Activated CD4-positive, alpha-beta T cell treated with anti-CD3 and anti-CD28 coated beads, Interleukin-2, amount 10 ng/mL, durations not matched to agents 24 days and 14 days (primary cell): ENCODE measurements at regions of chr1 and their contacts with region 1.

Region 1: DNA sequence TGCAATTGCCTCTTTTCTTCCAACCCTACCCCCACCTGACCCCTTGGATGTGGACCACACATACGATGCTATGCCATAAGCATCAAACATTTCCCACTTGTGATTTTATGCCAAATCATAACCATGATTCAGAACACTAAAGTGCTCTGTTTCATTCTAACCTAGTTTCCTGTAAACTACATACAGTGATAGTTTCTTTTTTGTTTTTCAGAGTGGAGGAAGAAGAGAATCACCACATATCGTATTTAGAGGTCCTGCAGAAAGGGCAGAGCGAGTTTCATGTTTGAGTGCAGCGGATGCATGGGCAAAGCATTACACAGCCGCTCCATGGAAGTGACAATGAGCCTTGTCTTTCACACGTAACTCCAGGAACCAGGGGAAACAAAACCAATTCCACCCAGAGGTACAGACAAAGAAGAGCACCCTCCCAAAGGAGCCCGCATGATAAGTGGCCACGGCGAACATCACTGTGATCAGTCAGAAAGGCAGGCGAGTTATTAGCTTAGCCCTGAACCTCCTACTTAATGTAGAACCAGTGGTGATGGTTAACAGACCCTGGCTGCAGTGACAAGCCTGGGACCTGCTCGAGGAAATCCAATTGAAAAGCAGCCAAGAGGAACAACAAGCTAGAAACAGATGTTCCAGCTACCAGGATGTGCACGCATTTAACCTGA is 64.0 kb upstream of the ZNF281 start:
- DNase-seq: peak; percentile 69
- H3K4me3 Mint-ChIP-seq: peak overlapping the region; percentile 17
- H3K27ac Mint-ChIP-seq: peak overlapping the region; percentile 71
- H3K4me1 Mint-ChIP-seq: peaks cover 30% of the 10 kb centered on the region
- H3K27me3 Mint-ChIP-seq: peaks cover 10% of the 10 kb centered on the region

Region 2: GRCh38 chr1:199945591-199945990 is 528.2 kb before region 1 on chr1:
- intact Hi-C with region 1: loop called (anchors 5 kb)
- DNase-seq: no peak
- H3K4me3 Mint-ChIP-seq: no peak overlapping the region
- H3K27ac Mint-ChIP-seq: no peak overlapping the region
- H3K4me1 Mint-ChIP-seq: peaks cover 12% of the 10 kb centered on the region
- H3K27me3 Mint-ChIP-seq: peaks cover 41% of the 10 kb centered on the region

Region 3: DNA sequence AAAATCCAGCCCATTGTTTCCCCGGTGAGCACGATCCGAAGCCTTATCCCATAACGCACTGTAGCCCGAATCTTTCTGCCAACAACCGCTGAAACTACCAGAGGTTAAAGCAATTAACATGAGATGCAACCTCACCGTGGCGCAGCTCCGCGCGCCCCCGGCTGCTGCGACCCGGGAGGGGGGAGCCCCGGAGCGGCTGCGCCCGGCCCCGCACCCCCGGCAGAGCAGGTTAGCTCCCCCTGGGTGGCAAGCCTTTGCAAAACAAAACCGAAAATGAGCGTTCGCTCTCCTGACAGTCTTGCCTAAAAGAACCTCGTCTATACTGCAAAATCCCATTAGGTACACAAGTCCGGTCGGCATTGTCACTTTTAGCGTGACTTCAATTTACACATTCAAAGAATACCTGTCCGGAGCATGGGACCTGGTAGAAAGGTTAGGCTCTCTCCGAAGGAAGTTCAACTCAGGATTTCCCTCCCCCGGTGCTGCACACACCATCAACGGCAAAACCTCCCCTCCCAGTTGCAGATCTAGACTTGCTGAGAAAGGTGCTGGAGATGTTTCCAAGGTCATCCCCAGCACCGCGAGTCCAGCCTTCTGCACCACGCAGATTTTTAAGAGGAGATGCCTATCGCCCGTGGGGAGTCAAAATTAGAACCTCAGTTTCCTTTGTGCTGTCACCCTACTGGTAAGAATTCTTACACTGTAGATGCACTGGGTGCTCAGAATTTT is 171.5 kb before region 1 on chr1:
- intact Hi-C with region 1: loop called (anchors 5 kb)
- DNase-seq: peak; percentile 90
- H3K4me3 Mint-ChIP-seq: peak overlapping the region; percentile 86
- H3K27ac Mint-ChIP-seq: peak overlapping the region; percentile 17
- H3K4me1 Mint-ChIP-seq: peaks cover 20% of the 10 kb centered on the region
- H3K27me3 Mint-ChIP-seq: peaks cover 38% of the 10 kb centered on the region

Region 4: GRCh38 chr1:200409761-200410565 is 63.9 kb before region 1 on chr1 and contains the start of gene ZNF281:
- intact Hi-C with region 1: loop called (anchors 2 kb)
- DNase-seq: peak; percentile 98
- H3K4me3 Mint-ChIP-seq: peak within 1 kb of the TSS; percentile 90
- H3K27ac Mint-ChIP-seq: peak within 1 kb of the TSS; percentile 95
- H3K4me1 Mint-ChIP-seq: peaks cover 50% of the 10 kb centered on the region
- H3K27me3 Mint-ChIP-seq: peaks cover 8% of the 10 kb centered on the region
- total RNA-seq, gene ZNF281: 19.0 and 20.4 TPM in 2 replicates

Region 5: DNA sequence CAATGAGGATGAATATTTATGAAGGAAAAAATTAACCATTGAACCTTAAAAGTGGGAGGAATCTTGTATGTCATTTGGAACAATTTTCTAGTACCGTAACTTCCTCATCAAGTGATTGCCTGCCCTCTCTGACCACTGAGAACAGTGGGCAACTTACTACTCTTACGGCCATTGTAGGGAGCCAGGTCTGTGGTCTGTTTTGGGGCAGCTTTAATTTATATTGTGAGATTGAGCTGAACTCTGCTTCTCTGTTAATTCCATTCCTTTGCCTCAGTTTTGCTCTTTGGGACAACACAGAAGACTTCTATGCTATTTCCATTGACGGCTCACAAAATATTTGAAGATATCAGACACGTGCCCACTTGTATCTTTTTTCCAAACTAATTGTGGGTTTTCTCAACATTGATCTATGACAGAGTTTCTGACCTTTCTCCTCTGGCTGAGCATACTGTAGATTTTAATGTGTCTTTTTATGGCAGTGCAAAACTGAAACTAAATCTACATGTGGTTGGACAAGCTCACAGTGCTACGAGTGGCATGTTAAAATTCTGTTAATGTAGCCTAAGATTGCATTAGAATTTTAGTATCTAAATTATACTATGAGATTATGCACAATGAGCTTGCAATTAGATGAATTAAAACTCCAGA is 36.2 kb before region 1 on chr1:
- intact Hi-C with region 1: loop called (anchors 5 kb)
- DNase-seq: peak; percentile 59
- H3K4me3 Mint-ChIP-seq: peak overlapping the region; percentile 73
- H3K27ac Mint-ChIP-seq: peak overlapping the region; percentile 84
- H3K4me1 Mint-ChIP-seq: peaks cover 9% of the 10 kb centered on the region
- H3K27me3 Mint-ChIP-seq: no peaks in the 10 kb centered on the region

Region 6: GRCh38 chr1:200448034-200448762 is 25.6 kb before region 1 on chr1:
- intact Hi-C with region 1: loop called (anchors 1 kb)
- DNase-seq: no peak
- H3K4me3 Mint-ChIP-seq: peak overlapping the region; percentile 33
- H3K27ac Mint-ChIP-seq: peak overlapping the region; percentile 95
- H3K4me1 Mint-ChIP-seq: peaks cover 38% of the 10 kb centered on the region
- H3K27me3 Mint-ChIP-seq: no peaks in the 10 kb centered on the region

Region 7: GRCh38 chr1:200488375-200489165 is 14.7 kb after region 1 on chr1:
- intact Hi-C with region 1: loop called (anchors 1 kb)
- DNase-seq: peak; percentile 85
- H3K4me3 Mint-ChIP-seq: no peak overlapping the region
- H3K27ac Mint-ChIP-seq: no peak overlapping the region
- H3K4me1 Mint-ChIP-seq: peaks cover 15% of the 10 kb centered on the region
- H3K27me3 Mint-ChIP-seq: peaks cover 31% of the 10 kb centered on the region